Cardiac septum (tissue), 1 donor: ENCODE measurements at regions of chr16 and their contacts with region 1.

Region 1: GRCh38 chr16:55133654-55134053 is 190.3 kb upstream of the IRX6 start:
- DNase-seq: no peak

Region 2: DNA sequence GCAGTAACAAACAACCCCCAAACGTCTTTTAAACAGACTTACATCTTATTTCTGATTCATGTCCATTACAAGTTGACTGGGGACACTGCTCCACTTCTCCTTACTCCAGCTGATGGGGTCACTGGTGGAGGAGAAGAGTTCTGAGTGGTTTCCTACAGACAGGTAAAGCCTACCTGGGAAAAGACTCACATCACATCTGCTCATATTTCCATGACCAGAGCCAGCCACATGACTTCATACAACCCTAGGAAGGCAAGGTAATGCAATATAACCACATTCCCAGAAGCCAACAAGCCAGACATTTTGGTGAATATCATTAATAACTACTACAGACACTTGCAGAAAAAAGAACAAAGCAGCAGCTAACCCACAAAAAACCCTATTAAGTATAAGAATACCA is 99.8 kb after region 1 on chr16:
- intact Hi-C with region 1: no loop called
- DNase-seq: no peak

Region 3: GRCh38 chr16:55308973-55309372 is 175.3 kb after region 1 on chr16:
- intact Hi-C with region 1: loop called (anchors 5 kb)
- DNase-seq: no peak